ENCODE measurements at regions of chr21 and their contacts with region 1.

Region 1: DNA sequence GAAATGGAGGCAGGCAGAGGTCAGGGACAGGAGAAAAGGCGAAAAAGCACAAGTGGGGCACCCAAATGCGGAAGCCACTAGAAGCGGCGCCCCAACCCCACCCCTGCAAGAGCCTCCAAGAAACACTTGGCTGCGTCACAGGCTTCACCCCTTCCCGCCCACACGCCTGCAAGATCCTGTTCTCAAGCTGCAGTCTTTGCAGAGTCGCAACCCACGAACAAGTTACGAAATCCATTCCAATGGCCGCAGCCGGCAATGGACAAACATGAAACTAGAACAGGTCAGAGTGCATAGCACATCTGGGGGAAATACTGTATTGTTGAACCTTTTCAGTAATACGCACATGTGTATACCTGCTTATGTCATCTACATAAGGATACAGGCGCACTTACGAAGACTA is 103.6 kb downstream of the PSMG1 start:
- DNase-seq: no peak
- H3K4me3 Mint-ChIP-seq: no peak overlapping the region
- H3K27ac Mint-ChIP-seq: no peak overlapping the region
- H3K4me1 Mint-ChIP-seq: no peaks in the 10 kb centered on the region
- H3K27me3 Mint-ChIP-seq: peaks cover 26% of the 10 kb centered on the region
- CTCF ChIP-seq: no peak

Region 2: DNA sequence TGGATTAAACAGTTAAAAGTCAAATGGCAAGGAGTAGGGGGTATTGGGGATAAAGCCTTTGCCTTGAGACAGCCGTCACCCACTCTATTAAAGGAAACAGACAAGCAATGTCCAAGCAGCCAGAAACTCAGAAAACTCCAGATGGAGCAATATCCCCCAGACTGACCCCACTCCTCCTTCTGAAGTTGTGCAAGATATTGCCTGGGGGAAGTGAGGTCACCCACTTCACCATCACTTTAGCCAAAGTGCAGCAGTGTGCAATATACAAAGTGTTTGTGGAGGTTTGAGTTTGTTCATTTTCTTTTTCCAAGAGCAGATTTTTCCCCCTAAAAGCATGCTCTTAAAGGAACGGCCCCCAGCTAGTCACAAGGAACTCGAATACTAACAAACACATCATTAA is 148.8 kb before region 1 on chr21:
- CTCF ChIA-PET with region 1: no interaction called
- intact Hi-C with region 1: no loop called
- DNase-seq: no peak
- H3K4me3 Mint-ChIP-seq: no peak overlapping the region
- H3K27ac Mint-ChIP-seq: no peak overlapping the region
- H3K4me1 Mint-ChIP-seq: no peaks in the 10 kb centered on the region
- H3K27me3 Mint-ChIP-seq: no peaks in the 10 kb centered on the region
- CTCF ChIP-seq: no peak

Region 3: DNA sequence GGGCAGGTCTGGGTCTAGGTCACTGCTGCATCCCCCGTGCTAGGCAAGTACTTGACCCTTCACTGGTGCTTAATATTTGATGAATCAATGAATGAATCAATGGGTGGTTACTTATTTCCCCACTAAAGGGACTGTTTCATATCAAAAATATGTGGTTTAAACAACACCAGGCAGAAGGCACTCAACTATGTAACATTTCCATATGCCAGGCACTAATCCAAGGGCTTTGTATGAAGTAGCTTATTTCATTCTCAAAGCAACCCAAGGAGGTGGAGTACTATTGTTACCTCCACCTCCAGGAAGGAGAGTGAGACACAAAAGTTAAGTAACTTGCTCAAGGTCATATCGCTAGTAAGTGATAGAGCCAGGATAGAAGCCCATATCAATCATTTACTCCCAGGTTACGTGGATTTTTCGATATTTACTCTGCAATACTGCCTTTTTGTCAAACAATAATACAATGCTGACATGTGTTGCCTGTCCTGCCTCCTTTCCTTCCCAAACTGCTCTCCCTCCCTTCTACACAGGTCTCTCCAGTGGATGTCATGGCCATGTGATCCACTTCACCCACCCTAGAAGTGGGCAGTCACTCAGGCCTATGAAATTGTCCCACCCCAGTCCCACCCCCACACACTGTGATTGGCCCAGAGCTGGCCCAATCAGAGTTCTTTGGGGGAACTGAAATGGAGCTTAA is 131.1 kb before region 1 on chr21:
- CTCF ChIA-PET with region 1: interaction called, 10 read pairs
- intact Hi-C with region 1: no loop called
- DNase-seq: no peak
- H3K4me3 Mint-ChIP-seq: no peak overlapping the region
- H3K27ac Mint-ChIP-seq: no peak overlapping the region
- H3K4me1 Mint-ChIP-seq: no peaks in the 10 kb centered on the region
- H3K27me3 Mint-ChIP-seq: no peaks in the 10 kb centered on the region
- CTCF ChIP-seq: no peak

Region 4: DNA sequence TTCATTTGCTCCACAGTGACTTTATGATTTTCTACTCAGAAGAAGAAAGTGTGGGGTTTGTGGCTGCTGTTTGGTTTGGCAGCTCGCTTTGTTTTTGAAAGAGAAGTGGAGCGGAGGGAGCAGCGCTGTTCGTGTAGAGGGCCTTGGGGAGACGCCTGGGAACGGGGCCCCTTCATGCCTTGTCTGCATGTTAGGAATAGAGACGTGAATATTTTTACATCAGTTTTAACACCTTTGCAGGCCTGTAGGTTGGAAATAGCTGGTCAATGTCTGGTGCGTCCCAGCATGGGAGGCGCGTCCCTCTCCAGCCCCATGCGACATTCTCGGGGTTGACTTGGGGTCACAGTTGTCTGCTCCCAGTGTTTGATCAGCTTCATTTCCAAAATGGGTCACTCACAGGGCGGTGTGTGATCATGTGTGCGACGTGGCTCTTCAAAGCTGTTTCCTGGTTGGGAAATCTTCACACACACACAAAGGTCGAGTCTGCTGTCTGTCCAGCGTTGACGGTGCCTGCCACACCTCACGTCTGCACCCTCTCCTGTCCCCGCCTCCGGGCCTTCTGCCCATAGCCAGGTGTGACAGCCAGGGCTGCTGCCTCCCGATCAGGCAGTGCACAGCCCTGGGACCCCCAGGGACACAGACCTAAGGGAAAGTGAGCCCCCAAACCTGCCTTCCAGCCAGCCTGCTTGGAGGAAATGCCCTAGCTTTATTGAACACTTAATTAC is 45.6 kb before region 1 on chr21:
- CTCF ChIA-PET with region 1: no interaction called
- intact Hi-C with region 1: no loop called
- DNase-seq: peak; percentile 16
- H3K4me3 Mint-ChIP-seq: no peak overlapping the region
- H3K27ac Mint-ChIP-seq: no peak overlapping the region
- H3K4me1 Mint-ChIP-seq: peaks cover 7% of the 10 kb centered on the region
- H3K27me3 Mint-ChIP-seq: peaks cover 18% of the 10 kb centered on the region
- CTCF ChIP-seq: no peak

Region 5: DNA sequence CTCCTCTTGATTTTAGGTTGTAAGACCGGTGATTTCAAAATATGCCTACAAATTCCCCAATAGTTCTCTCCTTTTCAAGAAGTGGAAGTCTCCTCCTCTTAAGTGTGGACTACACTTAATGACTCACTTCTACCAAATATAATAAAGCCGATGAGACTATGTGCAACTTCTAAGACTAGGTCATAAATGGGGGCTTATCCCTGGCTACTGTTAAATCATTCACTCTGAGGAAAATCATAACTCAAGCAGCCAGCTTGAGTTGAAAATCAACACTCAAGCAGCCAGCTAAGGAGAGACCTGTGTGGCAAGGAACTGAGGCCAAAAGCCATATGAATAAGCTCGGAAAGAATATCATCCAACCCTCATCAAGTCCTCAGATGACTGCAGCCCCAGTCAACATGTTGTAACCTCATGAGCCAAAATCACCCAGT is 153.3 kb after region 1 on chr21:
- CTCF ChIA-PET with region 1: no interaction called
- intact Hi-C with region 1: no loop called
- DNase-seq: no peak
- H3K4me3 Mint-ChIP-seq: no peak overlapping the region
- H3K27ac Mint-ChIP-seq: no peak overlapping the region
- H3K4me1 Mint-ChIP-seq: no peaks in the 10 kb centered on the region
- H3K27me3 Mint-ChIP-seq: no peaks in the 10 kb centered on the region
- CTCF ChIP-seq: no peak

Measured in Calu3 (cell line).